PC-9 (cell line): ENCODE measurements at regions of chr16 and their contacts with region 1.

Region 1: GRCh38 chr16:21663889-21664647 is at the start of gene OTOA:
- DNase-seq: no peak
- H3K4me3 ChIP-seq: no peak within 1 kb of the TSS
- H3K27ac ChIP-seq: no peak within 1 kb of the TSS
- H3K4me1 ChIP-seq: no peaks in the 10 kb centered on the region
- H3K27me3 ChIP-seq: no peaks in the 10 kb centered on the region
- CTCF ChIP-seq: no peak
- total RNA-seq, gene OTOA: not detected in 2 replicates

Region 2: GRCh38 chr16:21622545-21622944 is 41.5 kb before region 1 on chr16:
- CTCF ChIA-PET with region 1: no interaction called
- POLR2A ChIA-PET with region 1: interaction called, 26 read pairs
- intact Hi-C with region 1: no loop called
- DNase-seq: no peak
- H3K4me3 ChIP-seq: no peak overlapping the region
- H3K27ac ChIP-seq: peak overlapping the region; percentile 15; the same call in 1 of the 2 replicates
- H3K4me1 ChIP-seq: peaks cover 28% of the 10 kb centered on the region
- H3K27me3 ChIP-seq: no peaks in the 10 kb centered on the region
- CTCF ChIP-seq: no peak